ENCODE measurements at regions of chr3 and their contacts with region 1.

Region 1: GRCh38 chr3:46976326-46977190 is at the start of gene CCDC12:
- DNase-seq: peak; percentile 94 to 98
- H3K4me3 ChIP-seq: peak within 1 kb of the TSS; percentile 60 to 83
- H3K27ac ChIP-seq: peak within 1 kb of the TSS; percentile 84 to 90
- H3K4me1 ChIP-seq: peaks cover 23 to 29% of the 10 kb centered on the region in 2 donors
- H3K27me3 ChIP-seq: no peaks in the 10 kb centered on the region
- CTCF ChIP-seq: no peak
- total RNA-seq, gene CCDC12: 34.3 TPM

Region 2: GRCh38 chr3:46874430-46874829 is 102.1 kb before region 1 on chr3:
- intact Hi-C with region 1: loop called (anchors 5 kb)
- DNase-seq: no peak
- H3K4me3 ChIP-seq: no peak overlapping the region
- H3K27ac ChIP-seq: peak overlapping the region; percentile 75 to 78
- H3K4me1 ChIP-seq: peaks cover 20 to 23% of the 10 kb centered on the region in 2 donors
- H3K27me3 ChIP-seq: no peaks in the 10 kb centered on the region
- CTCF ChIP-seq: no peak

Region 3: DNA sequence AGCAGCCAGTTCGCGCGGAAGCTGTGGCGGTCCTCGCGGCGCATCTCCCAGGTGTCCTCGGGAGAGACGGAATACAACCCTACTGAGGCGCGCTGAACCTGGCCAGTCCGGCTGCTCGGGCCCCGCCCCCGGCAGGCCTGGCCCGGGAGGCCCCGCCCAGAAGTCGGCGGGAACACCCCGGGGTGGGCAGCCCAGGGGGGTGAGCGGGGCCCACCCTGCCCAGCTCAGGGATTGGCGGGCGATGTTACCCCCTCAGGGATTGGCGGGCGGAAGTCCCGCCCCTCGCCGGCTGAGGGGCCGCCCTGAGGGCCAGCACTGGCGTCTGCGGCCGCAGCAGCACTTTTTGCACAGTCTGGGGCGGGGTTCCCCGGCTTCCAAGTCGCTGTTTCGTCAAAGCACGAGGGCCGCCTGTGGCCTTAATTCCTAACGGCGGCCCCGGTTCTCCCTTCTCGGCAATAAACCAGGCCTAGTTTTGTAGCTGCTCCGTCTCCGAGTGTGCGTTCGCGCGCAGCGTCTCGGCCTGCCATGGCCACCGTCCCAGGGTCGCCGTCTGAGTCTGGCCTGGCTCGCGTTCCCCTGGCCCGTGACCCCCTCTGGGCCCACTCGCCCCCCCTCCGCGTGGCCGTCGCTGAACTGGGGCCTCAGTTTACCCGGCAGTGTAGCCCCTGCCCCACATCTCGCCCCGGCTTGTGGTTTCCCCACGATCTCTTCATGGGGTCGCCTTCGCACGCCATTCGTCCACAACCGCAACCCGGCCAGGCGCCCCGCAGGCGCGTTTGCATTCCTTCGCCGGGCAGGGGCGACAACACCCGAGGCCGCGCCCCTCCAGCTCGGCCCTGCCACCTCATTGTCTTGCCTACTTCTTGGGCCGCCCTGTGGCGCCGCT is 32.9 kb after region 1 on chr3:
- intact Hi-C with region 1: loop called (anchors 1 kb)
- DNase-seq: peak; percentile 68 to 94
- H3K4me3 ChIP-seq: peak overlapping the region; percentile 78 to 79
- H3K27ac ChIP-seq: peak overlapping the region; percentile 80 to 91
- H3K4me1 ChIP-seq: peaks cover 3 to 7% of the 10 kb centered on the region in 2 donors
- H3K27me3 ChIP-seq: no peaks in the 10 kb centered on the region
- CTCF ChIP-seq: no peak